ENCODE measurements at regions of chr17 and their contacts with region 1.

Region 1: GRCh38 chr17:65988081-65988850 is 203.7 kb downstream of the CEP112 start:
- DNase-seq: peak; percentile 39
- H3K4me3 ChIP-seq: no peak overlapping the region
- H3K27ac ChIP-seq: no peak overlapping the region
- H3K4me1 ChIP-seq: no peaks in the 10 kb centered on the region
- H3K27me3 ChIP-seq: no peaks in the 10 kb centered on the region
- CTCF ChIP-seq: peak; percentile 58 to 74

Region 2: GRCh38 chr17:65294179-65294720 is 694.0 kb before region 1 on chr17:
- CTCF ChIA-PET with region 1: interaction called, 19 read pairs
- dilution Hi-C with region 1: no loop called
- in situ Hi-C with region 1: loop called (anchors 10 to 25 kb)
- intact Hi-C with region 1: loop called (anchors 1 kb)
- DNase-seq: peak; percentile 28
- H3K4me3 ChIP-seq: no peak overlapping the region
- H3K27ac ChIP-seq: no peak overlapping the region
- H3K4me1 ChIP-seq: no peaks in the 10 kb centered on the region
- H3K27me3 ChIP-seq: no peaks in the 10 kb centered on the region
- CTCF ChIP-seq: peak; percentile 65 to 91

Region 3: DNA sequence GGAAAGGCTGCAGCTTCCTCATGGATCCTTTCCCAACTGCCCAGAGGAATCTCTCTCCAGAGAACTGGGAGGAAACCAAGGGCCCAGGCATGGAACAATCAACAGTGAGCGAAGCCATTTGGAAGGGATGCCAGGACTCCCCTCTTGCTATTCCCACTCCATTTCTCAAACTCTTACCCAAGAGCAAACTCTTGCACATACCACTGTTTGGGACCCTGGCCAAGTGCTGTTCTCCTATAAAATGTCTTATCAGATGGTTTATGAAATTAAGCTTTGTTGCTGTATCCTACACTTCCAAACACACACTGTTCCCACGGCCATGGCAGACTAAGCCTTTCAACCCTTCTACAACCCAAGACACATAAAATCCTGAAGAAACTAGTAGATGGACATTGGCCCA is 378.5 kb before region 1 on chr17:
- CTCF ChIA-PET with region 1: no interaction called
- dilution Hi-C with region 1: loop called (anchors 10 kb)
- in situ Hi-C with region 1: no loop called
- intact Hi-C with region 1: no loop called
- DNase-seq: no peak
- H3K4me3 ChIP-seq: no peak overlapping the region
- H3K27ac ChIP-seq: no peak overlapping the region
- H3K4me1 ChIP-seq: no peaks in the 10 kb centered on the region
- H3K27me3 ChIP-seq: no peaks in the 10 kb centered on the region
- CTCF ChIP-seq: no peak

Region 4: DNA sequence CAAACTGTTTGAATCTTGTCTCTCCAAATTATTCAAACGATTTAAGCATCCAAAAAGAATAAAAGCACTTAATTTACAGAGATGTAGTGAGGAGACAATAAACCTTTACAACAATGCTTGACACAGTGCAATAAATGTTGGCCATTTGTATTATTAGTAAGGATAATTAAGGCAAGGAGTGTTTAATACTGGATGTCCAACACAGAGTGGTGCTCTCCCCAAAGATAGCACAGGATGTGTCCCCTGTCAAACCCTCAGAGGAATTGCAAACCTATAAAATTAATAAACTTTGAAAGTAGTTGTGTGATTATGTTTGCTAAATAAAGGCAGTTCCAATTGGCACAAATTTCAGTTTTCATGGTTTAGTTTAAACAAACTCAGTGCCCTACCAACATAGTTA is 173.8 kb before region 1 on chr17:
- CTCF ChIA-PET with region 1: no interaction called
- dilution Hi-C with region 1: no loop called
- in situ Hi-C with region 1: no loop called
- intact Hi-C with region 1: loop called (anchors 1 kb)
- DNase-seq: no peak
- H3K4me3 ChIP-seq: no peak overlapping the region
- H3K27ac ChIP-seq: no peak overlapping the region
- H3K4me1 ChIP-seq: no peaks in the 10 kb centered on the region
- H3K27me3 ChIP-seq: no peaks in the 10 kb centered on the region
- CTCF ChIP-seq: no peak

Region 5: GRCh38 chr17:66165513-66166123 is 177.4 kb after region 1 on chr17:
- CTCF ChIA-PET with region 1: no interaction called
- dilution Hi-C with region 1: no loop called
- in situ Hi-C with region 1: loop called in 1 of 2 experiments (anchors 10 kb)
- intact Hi-C with region 1: loop called (anchors 2 kb)
- DNase-seq: peak; percentile 33
- H3K4me3 ChIP-seq: no peak overlapping the region
- H3K27ac ChIP-seq: no peak overlapping the region
- H3K4me1 ChIP-seq: no peaks in the 10 kb centered on the region
- H3K27me3 ChIP-seq: no peaks in the 10 kb centered on the region
- CTCF ChIP-seq: peak; percentile 62 to 64